ENCODE measurements at regions of chr14 and their contacts with region 1.

Region 1: DNA sequence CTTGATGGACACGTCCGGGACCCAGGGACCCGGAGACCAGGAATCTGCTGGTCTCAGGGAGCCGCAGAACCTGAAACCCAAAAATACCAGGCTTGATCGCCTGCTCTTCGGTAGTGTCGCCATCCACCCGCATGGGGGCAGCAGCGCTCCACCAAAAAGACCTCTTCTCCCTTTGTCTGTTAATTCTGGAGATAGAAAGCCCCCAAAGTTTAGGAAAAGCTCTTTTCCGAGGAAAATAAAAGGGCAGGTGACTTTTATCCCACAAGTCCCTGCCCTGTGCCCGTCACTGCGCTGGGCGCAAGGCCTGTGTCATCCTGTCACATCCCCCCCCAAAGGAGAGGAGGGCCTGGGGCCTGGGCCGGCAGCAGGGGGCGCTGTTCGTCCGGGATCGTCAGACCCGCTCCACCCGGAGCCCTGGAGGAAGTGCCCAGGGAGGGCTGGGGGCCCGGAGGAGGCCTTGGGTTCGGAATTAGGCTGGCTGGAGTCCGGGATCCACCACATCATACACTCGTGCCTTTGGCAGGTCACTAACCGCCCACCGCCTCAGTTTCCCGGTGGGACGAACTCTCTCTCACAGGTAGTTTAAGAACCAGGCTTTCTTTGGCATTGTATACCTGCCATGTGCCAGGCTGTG is 31.9 kb downstream of the DAD1 start:
- DNase-seq: peak; percentile 93
- H3K4me3 ChIP-seq: peak overlapping the region; percentile 57
- H3K27ac ChIP-seq: peak overlapping the region; percentile 97
- H3K4me1 ChIP-seq: peaks cover 91% of the 10 kb centered on the region
- CTCF ChIP-seq: peak; percentile 100

Region 2: DNA sequence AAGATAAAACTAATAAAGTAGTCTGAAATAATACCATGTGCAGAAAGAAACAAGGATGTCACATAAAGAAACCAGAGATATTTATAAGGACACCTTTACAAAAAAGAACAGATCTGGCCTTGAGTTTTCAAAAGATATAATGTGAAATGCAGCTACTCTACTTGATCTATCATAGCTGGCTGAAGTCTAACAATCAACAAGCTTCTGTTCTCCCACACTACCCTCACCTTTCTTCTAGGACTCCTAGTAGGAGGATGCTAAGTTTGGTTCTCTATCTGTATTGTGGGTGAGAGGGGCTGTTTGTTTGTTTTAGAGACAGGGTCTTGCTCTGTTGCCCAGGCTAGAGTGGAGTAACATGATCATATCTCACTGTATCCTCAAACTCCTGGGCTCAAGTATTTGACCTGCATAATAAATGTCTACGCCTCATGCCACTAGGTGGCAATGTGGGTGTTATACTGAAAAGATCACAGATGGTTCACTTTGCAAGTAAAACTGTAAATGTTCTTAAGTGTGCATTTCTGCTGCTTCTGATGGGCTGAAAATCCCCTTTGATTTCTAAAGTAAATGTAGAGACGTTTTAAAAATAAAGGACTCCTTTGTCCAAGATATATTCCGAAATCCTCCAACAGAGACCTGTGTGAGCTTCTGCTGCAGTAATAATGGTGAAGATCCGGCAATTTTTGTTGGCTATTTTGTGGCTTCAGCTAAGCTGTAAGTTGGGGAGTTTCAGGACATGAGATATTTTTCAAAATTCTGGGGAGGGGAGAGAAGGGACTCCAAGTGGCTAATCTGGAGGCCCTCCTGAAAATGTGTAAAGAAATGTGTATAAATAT is 237.4 kb before region 1 on chr14:
- CTCF ChIA-PET with region 1: no interaction called
- POLR2A ChIA-PET with region 1: no interaction called
- intact Hi-C with region 1: loop called (anchors 5 kb)
- DNase-seq: peak; percentile 77
- H3K4me3 ChIP-seq: no peak overlapping the region
- H3K27ac ChIP-seq: no peak overlapping the region
- H3K4me1 ChIP-seq: peaks cover under 1% of the 10 kb centered on the region
- CTCF ChIP-seq: peak; percentile 94

Region 3: GRCh38 chr14:22412926-22413411 is 144.1 kb before region 1 on chr14:
- CTCF ChIA-PET with region 1: no interaction called
- POLR2A ChIA-PET with region 1: no interaction called
- intact Hi-C with region 1: no loop called
- DNase-seq: no peak
- H3K4me3 ChIP-seq: no peak overlapping the region
- H3K27ac ChIP-seq: no peak overlapping the region
- H3K4me1 ChIP-seq: peaks cover 38% of the 10 kb centered on the region
- CTCF ChIP-seq: no peak

Region 4: DNA sequence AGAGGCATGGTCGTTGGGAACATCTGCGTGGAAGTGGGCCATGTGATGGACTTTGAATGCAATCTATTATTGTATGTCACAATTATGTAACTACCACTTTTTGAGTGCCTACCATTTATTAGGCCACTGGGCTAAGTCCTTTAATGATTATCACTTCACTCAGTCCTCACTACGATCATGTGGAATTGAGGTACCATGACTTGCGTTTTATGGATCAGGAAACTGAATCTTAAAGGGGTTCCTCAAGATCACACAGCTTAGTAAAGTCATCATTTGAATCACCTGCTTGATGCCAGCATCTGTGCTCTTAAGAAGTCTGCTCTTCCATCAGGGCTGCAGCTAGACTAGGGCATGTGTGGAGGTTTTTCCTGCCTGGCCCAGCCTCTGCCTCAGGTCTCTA is 104.8 kb before region 1 on chr14:
- CTCF ChIA-PET with region 1: no interaction called
- POLR2A ChIA-PET with region 1: no interaction called
- intact Hi-C with region 1: no loop called
- DNase-seq: no peak
- H3K4me3 ChIP-seq: no peak overlapping the region
- H3K27ac ChIP-seq: no peak overlapping the region
- H3K4me1 ChIP-seq: peaks cover 65% of the 10 kb centered on the region
- CTCF ChIP-seq: no peak

Region 5: DNA sequence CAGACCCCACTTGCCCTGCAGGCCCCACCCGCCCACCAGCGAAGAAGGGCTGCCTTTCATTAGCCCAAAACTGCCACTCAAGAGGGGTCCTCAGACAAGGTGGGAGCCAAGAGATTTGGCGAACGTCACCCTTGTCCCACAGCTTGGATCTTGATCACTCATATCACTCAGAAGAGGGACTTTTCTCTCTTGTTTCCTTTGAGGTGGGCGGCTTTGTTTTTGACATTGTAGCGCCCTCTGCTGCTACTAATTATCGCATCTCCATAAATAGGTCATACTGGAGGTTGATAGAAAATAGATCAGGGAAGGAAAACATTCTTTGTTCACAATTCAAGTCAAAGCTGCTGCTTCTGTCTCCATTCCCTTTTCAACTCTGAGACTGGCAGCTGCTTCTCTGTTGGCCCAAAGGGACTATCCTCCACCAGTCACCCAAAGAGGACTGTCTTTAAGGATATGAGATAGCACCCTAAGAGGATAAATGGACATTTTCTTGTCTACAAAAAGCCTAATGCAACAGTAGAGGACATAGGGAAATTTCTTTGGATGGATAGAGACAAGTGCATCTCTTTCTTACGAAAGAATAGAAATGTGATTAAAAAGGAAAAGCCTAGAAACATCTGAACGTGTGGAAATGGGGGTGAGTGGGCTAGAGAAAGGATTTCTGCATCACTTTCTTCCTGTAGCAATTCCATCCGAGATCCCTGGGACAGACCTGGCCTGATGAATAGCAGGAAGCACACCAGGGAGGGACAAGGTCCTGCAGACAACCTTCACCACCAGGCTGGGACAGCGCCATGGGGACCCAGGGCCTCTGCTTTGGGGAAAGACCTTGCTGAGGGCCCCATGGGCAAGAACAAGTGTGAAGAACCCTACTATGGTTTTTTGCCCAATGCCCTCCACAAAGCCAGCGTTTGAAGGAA is 83.9 kb before region 1 on chr14:
- CTCF ChIA-PET with region 1: interaction called, 3 read pairs
- POLR2A ChIA-PET with region 1: interaction called, 17 read pairs
- intact Hi-C with region 1: loop called (anchors 1 kb)
- DNase-seq: peak; percentile 89
- H3K4me3 ChIP-seq: peak overlapping the region; percentile 37
- H3K27ac ChIP-seq: peak overlapping the region; percentile 81
- H3K4me1 ChIP-seq: peaks cover 98% of the 10 kb centered on the region
- CTCF ChIP-seq: peak; percentile 96

Region 6: DNA sequence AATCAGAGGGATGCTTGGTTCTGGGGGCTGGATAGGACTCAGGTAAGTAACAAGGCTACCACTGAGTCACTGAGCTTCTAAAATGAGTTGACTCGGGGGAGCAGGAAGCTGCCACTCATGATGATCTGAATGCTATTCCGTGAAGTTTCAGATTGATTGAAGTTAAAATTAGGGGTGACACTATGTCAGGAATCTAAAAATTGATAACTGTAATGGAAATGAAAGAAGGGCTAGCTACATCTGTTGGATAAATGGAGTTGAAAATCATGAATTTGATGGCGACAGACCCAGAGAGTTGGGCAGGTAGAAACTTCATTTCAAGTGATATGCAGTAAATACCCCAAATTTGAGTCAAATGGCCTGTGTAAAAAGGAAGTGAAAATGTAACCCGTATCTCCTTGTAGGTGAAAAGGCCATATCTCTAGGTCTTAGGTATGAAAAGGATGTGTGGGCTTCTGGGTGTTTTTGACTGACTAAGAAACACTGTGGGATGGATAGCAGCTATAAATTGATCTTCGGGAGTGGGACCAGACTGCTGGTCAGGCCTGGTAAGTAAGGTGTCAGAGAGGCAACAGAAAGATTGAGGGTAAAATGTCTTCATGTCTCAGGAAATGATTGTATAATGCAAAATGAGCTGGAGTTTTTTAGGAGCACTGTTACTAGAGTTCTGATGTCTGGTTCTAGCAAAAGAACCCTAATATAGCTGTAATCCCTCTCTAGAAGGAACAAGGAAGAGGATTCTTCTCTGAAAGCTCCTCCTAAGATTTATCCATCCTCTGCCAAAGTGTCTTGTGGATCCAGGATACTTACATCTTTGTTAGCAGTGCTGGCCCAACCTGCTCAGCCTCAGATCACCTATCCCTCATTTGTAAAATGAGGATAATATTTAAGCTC is 25.4 kb before region 1 on chr14:
- CTCF ChIA-PET with region 1: interaction called, 19 read pairs
- POLR2A ChIA-PET with region 1: interaction called, 47 read pairs
- intact Hi-C with region 1: loop called (anchors 1 kb)
- DNase-seq: peak; percentile 79
- H3K4me3 ChIP-seq: peak overlapping the region; percentile 70
- H3K27ac ChIP-seq: peak overlapping the region; percentile 88
- H3K4me1 ChIP-seq: peaks cover 84% of the 10 kb centered on the region
- CTCF ChIP-seq: no peak

Region 7: GRCh38 chr14:22766456-22767322 is 209.6 kb after region 1 on chr14 and contains the start of gene OXA1L:
- CTCF ChIA-PET with region 1: no interaction called
- POLR2A ChIA-PET with region 1: no interaction called
- intact Hi-C with region 1: loop called (anchors 1 kb)
- DNase-seq: peak; percentile 99
- H3K4me3 ChIP-seq: peak within 1 kb of the TSS; percentile 95
- H3K27ac ChIP-seq: peak within 1 kb of the TSS; percentile 57
- H3K4me1 ChIP-seq: peaks cover 24% of the 10 kb centered on the region
- CTCF ChIP-seq: no peak
- total RNA-seq, gene OXA1L: 128 and 153 TPM in 2 replicates

Region 8: DNA sequence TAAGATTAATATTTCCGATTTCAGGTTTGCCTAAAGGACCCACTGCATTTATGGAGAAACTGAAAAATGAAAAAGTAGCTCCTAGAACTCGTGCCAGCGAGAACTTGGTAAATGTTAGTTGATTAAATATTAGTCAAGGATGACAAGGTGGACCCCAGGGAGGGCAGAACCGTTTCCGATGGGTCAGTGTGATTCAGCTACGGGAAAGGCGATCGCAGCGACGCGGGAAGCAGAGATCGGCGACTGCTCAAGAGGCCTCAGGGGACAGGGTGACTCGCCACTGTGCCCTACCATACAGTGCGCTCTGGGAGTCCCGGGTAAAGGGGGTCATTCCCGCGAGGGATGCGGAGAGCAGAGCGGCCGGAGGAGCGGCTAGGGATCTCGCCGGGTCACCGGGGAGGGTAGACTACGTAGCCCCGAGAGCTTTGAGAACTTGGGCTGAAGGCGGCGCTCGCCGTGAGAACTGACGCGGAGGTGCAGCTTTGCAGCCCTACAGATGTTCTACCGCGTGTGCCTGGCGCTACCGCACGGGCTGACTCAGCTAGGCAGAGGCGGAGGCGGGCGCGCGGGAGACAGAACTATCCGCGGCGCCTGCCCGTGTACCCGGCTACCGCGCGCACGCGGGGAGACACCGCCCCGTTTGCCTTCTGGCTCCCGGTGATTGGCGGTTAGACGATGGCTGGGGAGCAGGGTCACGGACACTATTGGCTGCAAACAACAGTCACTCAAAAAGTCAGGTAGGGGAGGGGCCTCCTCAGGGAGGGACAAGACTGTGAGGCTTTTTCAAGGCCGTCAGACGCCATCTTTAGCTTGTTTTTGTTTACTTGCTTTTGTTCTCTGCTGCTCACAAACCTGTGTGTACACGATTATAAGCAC is 449.7 kb after region 1 on chr14:
- CTCF ChIA-PET with region 1: no interaction called
- POLR2A ChIA-PET with region 1: no interaction called
- intact Hi-C with region 1: loop called (anchors 5 kb)
- DNase-seq: peak; percentile 98
- H3K4me3 ChIP-seq: peak overlapping the region; percentile 80
- H3K27ac ChIP-seq: peak overlapping the region; percentile 82
- H3K4me1 ChIP-seq: peaks cover 44% of the 10 kb centered on the region
- CTCF ChIP-seq: peak; percentile 47

Measured in OCI-LY7 (cell line).